Activated B cell treated with CpG ODN at 0.5 μM for 24 hours (primary cell): ENCODE measurements at regions of chr11 and their contacts with region 1.

Region 1: DNA sequence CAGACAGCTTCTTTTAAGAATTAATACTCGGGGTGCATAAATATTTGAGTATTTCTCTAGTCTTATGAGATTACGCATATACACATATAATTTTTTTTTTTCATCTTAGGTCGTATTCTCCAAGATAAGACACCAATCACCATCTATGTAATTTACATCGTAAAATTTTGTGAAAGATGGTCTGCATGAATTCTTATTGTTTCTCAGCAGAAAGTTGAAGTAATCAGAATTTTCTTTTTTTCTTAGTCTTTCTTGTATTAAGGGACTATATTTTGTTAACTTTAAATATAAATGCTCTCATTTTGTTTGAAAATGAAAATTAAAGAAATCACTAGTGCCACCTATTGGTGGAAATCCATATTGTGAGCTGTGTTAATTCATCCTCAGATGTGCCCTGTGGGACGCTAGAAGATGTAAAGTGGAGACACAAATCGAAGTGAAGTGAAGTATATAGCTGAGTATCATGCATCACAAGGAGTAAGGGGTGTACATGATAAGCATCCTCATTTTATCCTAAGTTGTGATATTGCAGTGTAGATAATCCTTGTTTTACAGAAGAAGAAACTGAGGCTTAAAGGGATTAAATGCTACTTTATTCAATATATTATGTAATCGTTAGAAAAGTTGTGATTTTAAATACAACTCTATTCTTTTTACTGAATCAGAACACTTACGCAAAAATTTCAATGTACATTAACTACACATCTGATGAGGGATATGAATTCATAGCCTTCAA is 2084.3 kb downstream of the LRRC4C start:
- DNase-seq: no peak
- ATAC-seq: no peak
- H3K4me3 Mint-ChIP-seq: no peak overlapping the region
- H3K27ac Mint-ChIP-seq: no peak overlapping the region
- H3K4me1 Mint-ChIP-seq: peaks cover 4% of the 10 kb centered on the region
- H3K27me3 Mint-ChIP-seq: no peaks in the 10 kb centered on the region
- CTCF ChIP-seq: no peak

Region 2: DNA sequence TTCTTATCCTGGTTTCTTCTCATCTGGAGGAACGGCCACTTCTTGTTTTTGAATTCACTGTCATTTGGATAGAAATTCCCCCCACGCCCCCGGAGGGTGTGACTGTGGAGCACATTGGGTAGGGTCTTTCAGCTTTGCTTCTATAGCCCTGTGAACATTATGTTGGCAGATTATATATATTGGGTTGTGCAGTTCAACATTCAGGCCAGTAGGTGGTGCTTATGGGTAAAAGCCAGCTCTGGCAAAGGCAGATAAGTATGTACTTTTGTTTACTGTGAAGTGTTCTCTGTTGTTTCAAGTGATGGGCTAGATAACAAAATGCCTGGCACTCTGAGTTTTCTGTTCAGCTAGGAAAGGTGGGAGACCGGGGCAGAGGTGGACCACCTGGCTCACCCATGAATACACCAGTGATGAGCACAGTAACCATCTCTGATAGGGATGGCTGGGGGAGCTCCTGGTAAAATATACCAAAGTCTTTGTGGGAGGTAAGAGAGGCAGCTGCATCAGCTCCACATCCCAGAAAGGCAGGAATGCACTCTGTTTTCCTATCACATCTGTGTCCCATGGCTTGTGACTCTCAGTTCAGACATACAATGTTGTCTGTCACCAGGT is 1428.9 kb before region 1 on chr11:
- CTCF ChIA-PET with region 1: no interaction called
- POLR2A ChIA-PET with region 1: no interaction called
- intact Hi-C with region 1: loop called (anchors 5 kb)
- DNase-seq: no peak
- ATAC-seq: no peak
- H3K4me3 Mint-ChIP-seq: no peak overlapping the region
- H3K27ac Mint-ChIP-seq: no peak overlapping the region
- H3K4me1 Mint-ChIP-seq: no peaks in the 10 kb centered on the region
- H3K27me3 Mint-ChIP-seq: no peaks in the 10 kb centered on the region
- CTCF ChIP-seq: no peak

Region 3: DNA sequence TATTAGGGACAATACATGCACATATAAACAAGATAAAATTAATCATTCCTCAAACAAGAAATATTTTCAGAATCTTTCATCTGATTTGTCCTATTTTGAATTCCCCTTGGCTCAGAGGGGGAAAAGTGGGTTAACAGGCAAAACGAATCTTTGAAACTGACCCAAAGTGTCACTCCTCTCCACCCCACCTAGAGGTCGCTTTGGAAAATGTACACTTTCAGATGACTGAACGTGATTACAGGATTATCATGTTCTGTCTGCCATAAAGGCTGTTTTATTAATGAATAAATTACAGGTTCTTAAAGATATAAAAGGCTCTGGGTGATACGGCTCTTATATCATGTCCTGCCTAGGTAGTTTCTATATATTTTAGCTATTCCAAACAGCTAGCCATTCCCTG is 349.3 kb after region 1 on chr11:
- CTCF ChIA-PET with region 1: no interaction called
- POLR2A ChIA-PET with region 1: no interaction called
- intact Hi-C with region 1: no loop called
- DNase-seq: no peak
- ATAC-seq: no peak
- H3K4me3 Mint-ChIP-seq: no peak overlapping the region
- H3K27ac Mint-ChIP-seq: no peak overlapping the region
- H3K4me1 Mint-ChIP-seq: no peaks in the 10 kb centered on the region
- H3K27me3 Mint-ChIP-seq: no peaks in the 10 kb centered on the region
- CTCF ChIP-seq: no peak